CD8-positive, alpha-beta memory T cell (primary cell): ENCODE measurements at regions of chr1 and their contacts with region 1.

Region 1: DNA sequence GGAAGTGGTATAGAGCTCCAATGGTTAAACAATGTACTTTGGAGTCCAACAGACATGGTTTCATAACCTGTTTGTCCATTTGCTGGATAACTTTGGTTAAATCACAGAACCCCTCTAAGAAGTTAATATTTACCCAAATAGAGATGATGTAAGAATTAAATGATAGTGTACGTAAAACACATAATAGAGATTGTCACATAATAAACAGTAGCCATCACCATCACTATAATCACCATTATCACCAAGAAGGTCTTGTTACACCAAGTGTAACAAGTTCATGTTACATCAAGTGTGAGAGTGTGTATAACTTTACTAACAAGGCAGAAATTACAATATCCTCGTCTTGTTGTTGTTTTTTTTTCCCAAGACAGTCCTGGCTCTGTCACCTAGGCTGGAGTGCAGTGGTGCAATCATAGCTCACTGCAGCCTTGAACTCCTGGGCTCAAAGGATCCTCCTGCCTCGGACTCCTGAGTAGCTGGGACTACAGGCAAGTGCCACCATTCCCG is 23.3 kb downstream of the NUCKS1 start:
- DNase-seq: no peak
- H3K4me3 ChIP-seq: no peak overlapping the region
- H3K4me3 Mint-ChIP-seq: no peak overlapping the region
- H3K27ac ChIP-seq: no peak overlapping the region
- H3K27ac Mint-ChIP-seq: no peak overlapping the region
- H3K4me1 ChIP-seq: no peaks in the 10 kb centered on the region
- H3K4me1 Mint-ChIP-seq: peaks cover 22 to 51% (median 43%) of the 10 kb centered on the region in 3 donors
- H3K27me3 ChIP-seq: no peaks in the 10 kb centered on the region
- H3K27me3 Mint-ChIP-seq: no peaks in the 10 kb centered on the region

Region 2: GRCh38 chr1:205488086-205488723 is 238.5 kb before region 1 on chr1:
- CTCF ChIA-PET with region 1: no interaction called
- POLR2A ChIA-PET with region 1: no interaction called
- DNase-seq: peak; percentile 16 to 62 (median 30)
- H3K4me3 ChIP-seq: no peak overlapping the region
- H3K4me3 Mint-ChIP-seq: no peak overlapping the region
- H3K27ac ChIP-seq: no peak overlapping the region
- H3K27ac Mint-ChIP-seq: peak overlapping the region in 1 of 8 donors; percentile 43
- H3K4me1 ChIP-seq: peaks cover 8% of the 10 kb centered on the region
- H3K4me1 Mint-ChIP-seq: peaks cover 20 to 24% (median 23%) of the 10 kb centered on the region in 3 donors
- H3K27me3 ChIP-seq: peaks cover 12% of the 10 kb centered on the region
- H3K27me3 Mint-ChIP-seq: peaks cover 5 to 24% of the 10 kb centered on the region in 2 donors

Region 3: DNA sequence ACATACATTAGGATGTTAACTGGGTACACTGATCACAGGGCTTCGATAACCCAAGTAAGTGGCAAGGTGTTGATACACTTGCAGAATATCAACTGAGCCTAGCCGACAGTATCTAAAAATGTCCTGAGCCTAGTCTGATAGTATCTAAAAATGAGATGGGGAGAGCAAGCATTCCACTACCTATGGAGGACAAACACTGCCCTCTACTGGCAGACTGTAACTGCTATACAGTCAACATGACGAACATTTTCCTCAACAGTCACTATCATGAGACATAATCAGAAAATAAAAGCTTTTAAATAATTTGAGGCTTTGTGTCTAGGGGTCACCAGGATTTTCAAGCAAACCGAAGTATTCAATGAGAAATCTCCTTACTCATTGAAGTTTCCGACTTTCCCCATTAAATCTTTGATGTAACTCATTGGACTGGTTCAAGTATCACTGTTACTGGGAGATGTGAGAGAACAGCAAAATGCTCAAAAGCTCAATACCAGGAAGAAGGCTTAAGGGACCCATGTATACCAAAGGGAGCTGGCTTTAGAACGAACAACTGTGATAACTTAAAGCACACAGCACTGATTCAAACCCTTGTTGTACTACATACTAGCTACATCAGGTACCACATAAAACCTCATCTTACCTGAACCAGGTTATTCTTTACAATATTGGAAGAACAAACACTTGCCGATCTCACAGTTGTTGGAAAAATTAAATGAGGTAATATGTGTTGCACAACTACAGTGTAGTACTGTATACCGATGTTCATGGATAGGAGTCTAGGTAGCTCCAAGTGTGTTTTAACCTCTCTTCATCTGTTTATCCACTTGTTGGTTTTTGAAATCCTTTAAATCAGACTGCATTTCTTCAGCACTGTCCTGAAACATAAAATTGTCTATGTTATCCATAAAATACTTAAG is 15.3 kb before region 1 on chr1:
- CTCF ChIA-PET with region 1: interaction called, 40 read pairs
- POLR2A ChIA-PET with region 1: interaction called, 3 read pairs
- DNase-seq: peak; percentile 40 to 68 (median 47)
- H3K4me3 ChIP-seq: no peak overlapping the region
- H3K4me3 Mint-ChIP-seq: no peak overlapping the region
- H3K27ac ChIP-seq: no peak overlapping the region
- H3K27ac Mint-ChIP-seq: peak overlapping the region; percentile 27 to 76 (median 44)
- H3K4me1 ChIP-seq: peaks cover 4% of the 10 kb centered on the region
- H3K4me1 Mint-ChIP-seq: peaks cover 9 to 20% (median 11%) of the 10 kb centered on the region in 3 donors
- H3K27me3 ChIP-seq: no peaks in the 10 kb centered on the region
- H3K27me3 Mint-ChIP-seq: peaks cover 0 to 2% of the 10 kb centered on the region in 2 donors